Sigmoid colon (tissue), 7 donors: ENCODE measurements at regions of chr9 and their contacts with region 1.

Region 1: DNA sequence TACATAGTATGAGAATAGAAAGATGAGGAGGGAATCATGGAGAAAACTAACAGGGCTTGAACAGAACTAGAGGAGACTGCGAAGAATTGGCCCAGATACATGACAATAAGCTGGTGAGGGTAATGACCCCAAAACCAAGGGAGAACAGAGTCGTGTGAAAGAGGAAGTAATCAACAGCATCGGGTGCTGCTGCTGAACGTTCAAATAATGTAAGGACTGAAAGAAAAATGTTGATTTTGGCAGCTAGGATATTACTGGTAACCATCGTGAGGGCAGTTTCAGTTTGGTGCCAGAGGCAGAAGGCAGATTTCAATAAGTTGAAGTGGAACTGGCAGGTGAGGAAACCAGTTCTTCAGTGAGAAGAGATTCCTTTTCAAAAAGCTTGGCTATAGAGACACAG is 66.8 kb upstream of the SMC2 start:
- DNase-seq: no peak
- H3K4me3 ChIP-seq: no peak overlapping the region
- H3K27ac ChIP-seq: no peak overlapping the region
- H3K4me1 ChIP-seq: peaks cover 0 to 4% (median 0%) of the 10 kb centered on the region in 4 donors
- H3K27me3 ChIP-seq: no peaks in the 10 kb centered on the region
- CTCF ChIP-seq: no peak
- EP300 ChIP-seq: no peak
- POLR2A ChIP-seq: no peak

Region 2: GRCh38 chr9:104093647-104094533 is 66.6 kb after region 1 on chr9 and contains the start of gene SMC2:
- intact Hi-C with region 1: loop called (anchors 2 kb)
- DNase-seq: peak; percentile 92
- H3K4me3 ChIP-seq: peak within 1 kb of the TSS; percentile 49 to 76 (median 58)
- H3K27ac ChIP-seq: peak within 1 kb of the TSS; percentile 92 to 95 (median 93)
- H3K4me1 ChIP-seq: peaks cover 0 to 43% (median 27%) of the 10 kb centered on the region in 4 donors
- H3K27me3 ChIP-seq: no peaks in the 10 kb centered on the region
- CTCF ChIP-seq: no peak
- EP300 ChIP-seq: no peak
- POLR2A ChIP-seq: peak; percentile 73 to 88
- total RNA-seq, gene SMC2: 4.1 to 8.6 (median 8.1) TPM

Region 3: DNA sequence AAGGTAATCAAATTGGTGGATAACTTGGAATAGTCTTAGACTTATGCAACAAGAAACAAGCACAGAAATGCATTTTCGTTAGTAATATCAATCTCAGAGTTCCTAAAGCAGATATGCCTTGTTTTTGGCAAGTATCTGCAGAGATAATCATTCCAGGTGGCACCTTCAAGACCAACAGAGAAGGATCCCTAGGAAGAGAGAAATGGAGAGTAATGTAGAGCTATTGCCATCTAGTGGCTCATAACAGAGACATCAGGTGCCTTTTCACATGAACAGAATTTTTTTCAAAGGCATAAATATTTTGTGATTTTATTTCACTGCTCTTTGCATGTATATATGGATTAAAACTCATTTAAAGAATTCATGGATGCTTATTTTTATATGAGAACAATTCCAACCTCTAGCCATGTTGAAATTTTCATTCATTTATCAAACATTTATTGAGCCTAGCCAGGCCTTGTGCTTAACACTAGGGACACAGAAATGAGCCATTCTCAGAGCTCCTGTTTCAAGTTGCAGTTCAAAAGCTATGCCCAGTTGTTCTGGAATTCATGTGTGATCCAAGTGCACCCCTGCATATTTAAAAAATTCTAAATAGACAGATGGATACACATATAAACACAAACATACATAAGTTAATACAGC is 359.3 kb after region 1 on chr9:
- intact Hi-C with region 1: loop called (anchors 2 kb)
- DNase-seq: no peak
- H3K4me3 ChIP-seq: no peak overlapping the region
- H3K27ac ChIP-seq: no peak overlapping the region
- H3K4me1 ChIP-seq: no peaks in the 10 kb centered on the region
- H3K27me3 ChIP-seq: no peaks in the 10 kb centered on the region
- CTCF ChIP-seq: peak in 3 of 4 experiments; percentile 26 to 57 (median 36)
- EP300 ChIP-seq: no peak
- POLR2A ChIP-seq: no peak